ENCODE measurements at regions of chr18 and their contacts with region 1.

Region 1: GRCh38 chr18:30684825-30685481 is 357.6 kb downstream of the DSC3 start:
- DNase-seq: no peak
- ATAC-seq: no peak
- H3K4me3 ChIP-seq: no peak overlapping the region
- H3K4me3 Mint-ChIP-seq: no peak overlapping the region
- H3K27ac ChIP-seq: no peak overlapping the region
- H3K27ac Mint-ChIP-seq: no peak overlapping the region
- H3K4me1 ChIP-seq: no peaks in the 10 kb centered on the region
- H3K4me1 Mint-ChIP-seq: no peaks in the 10 kb centered on the region
- H3K27me3 ChIP-seq: no peaks in the 10 kb centered on the region
- H3K27me3 Mint-ChIP-seq: no peaks in the 10 kb centered on the region
- CTCF ChIP-seq: no peak

Region 2: GRCh38 chr18:30658306-30658705 is 26.6 kb before region 1 on chr18:
- CTCF ChIA-PET with region 1: no interaction called
- POLR2A ChIA-PET with region 1: no interaction called
- intact Hi-C with region 1: no loop called
- DNase-seq: no peak
- ATAC-seq: no peak
- H3K4me3 ChIP-seq: no peak overlapping the region
- H3K4me3 Mint-ChIP-seq: no peak overlapping the region
- H3K27ac ChIP-seq: no peak overlapping the region
- H3K27ac Mint-ChIP-seq: no peak overlapping the region
- H3K4me1 ChIP-seq: no peaks in the 10 kb centered on the region
- H3K4me1 Mint-ChIP-seq: no peaks in the 10 kb centered on the region
- H3K27me3 ChIP-seq: no peaks in the 10 kb centered on the region
- H3K27me3 Mint-ChIP-seq: no peaks in the 10 kb centered on the region
- CTCF ChIP-seq: no peak

Region 3: GRCh38 chr18:30730915-30731314 is 46.0 kb after region 1 on chr18:
- CTCF ChIA-PET with region 1: no interaction called
- POLR2A ChIA-PET with region 1: no interaction called
- intact Hi-C with region 1: loop called in 1 of 2 experiments (anchors 5 kb)
- DNase-seq: no peak
- ATAC-seq: no peak
- H3K4me3 ChIP-seq: no peak overlapping the region
- H3K4me3 Mint-ChIP-seq: no peak overlapping the region
- H3K27ac ChIP-seq: no peak overlapping the region
- H3K27ac Mint-ChIP-seq: no peak overlapping the region
- H3K4me1 ChIP-seq: no peaks in the 10 kb centered on the region
- H3K4me1 Mint-ChIP-seq: no peaks in the 10 kb centered on the region
- H3K27me3 ChIP-seq: no peaks in the 10 kb centered on the region
- H3K27me3 Mint-ChIP-seq: no peaks in the 10 kb centered on the region
- CTCF ChIP-seq: no peak

Measured in CD8-positive, alpha-beta T cell (primary cell).